Activated B cell treated with CpG ODN at 0.5 μM for 24 hours (primary cell): ENCODE measurements at regions of chr9 and their contacts with region 1.

Region 1: DNA sequence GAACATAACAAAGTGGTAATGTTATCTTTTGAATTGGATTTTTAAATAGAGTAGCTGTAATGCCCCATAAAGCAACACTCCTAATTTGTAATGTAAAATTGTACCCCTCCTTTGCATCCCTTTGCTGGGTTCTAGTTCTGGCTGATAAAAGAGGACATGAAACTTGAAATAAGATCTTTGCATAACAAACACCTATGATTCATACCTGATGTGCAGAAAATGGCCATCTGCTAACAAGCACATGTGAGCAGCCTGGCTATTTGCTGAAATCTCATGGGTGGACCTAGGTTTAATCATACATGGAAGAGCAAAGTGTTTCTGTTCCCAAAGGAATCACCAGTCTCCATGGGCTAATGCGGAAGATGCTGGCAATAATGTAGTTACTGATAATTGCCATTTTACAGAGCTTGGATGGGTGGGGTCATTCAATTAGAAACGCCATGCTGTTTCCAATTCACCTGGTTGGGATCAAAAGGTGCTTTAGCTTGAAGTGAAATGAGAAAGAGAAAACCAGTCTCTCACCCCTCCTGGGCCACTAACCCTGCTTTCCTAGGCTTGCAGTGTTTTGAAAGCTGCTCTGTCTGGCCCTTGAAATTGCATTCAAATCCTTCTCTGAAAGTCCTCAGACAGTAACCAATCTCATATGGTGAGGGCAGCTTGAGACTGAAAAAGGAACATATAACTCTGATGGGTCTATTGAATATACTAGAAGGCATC is 585.1 kb downstream of the TLE4 start:
- DNase-seq: no peak
- ATAC-seq: peak; percentile 88
- H3K4me3 Mint-ChIP-seq: no peak overlapping the region
- H3K27ac Mint-ChIP-seq: peak overlapping the region; percentile 73
- H3K4me1 Mint-ChIP-seq: peaks cover 51% of the 10 kb centered on the region
- H3K27me3 Mint-ChIP-seq: no peaks in the 10 kb centered on the region
- CTCF ChIP-seq: no peak

Region 2: DNA sequence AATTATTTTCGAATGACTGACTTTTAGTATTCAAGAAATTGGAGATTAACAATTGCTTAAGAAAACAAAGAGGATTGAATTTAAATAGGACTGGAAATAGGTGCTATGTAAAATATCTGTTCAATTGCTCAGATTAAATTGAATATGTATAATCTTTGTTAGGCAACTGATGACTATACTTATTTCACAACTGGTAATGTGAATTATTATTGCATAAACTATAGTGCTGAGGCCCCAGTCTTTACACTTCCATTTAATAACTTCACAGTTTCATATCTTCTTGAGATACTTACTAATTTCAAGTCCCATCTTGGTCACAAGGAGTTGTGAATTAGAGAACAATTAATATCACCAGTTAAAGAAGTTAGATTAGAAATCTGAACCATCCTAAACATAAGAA is 1904.3 kb before region 1 on chr9:
- CTCF ChIA-PET with region 1: no interaction called
- POLR2A ChIA-PET with region 1: no interaction called
- intact Hi-C with region 1: loop called (anchors 10 kb)
- DNase-seq: no peak
- ATAC-seq: no peak
- H3K4me3 Mint-ChIP-seq: no peak overlapping the region
- H3K27ac Mint-ChIP-seq: no peak overlapping the region
- H3K4me1 Mint-ChIP-seq: no peaks in the 10 kb centered on the region
- H3K27me3 Mint-ChIP-seq: no peaks in the 10 kb centered on the region
- CTCF ChIP-seq: no peak

Region 3: DNA sequence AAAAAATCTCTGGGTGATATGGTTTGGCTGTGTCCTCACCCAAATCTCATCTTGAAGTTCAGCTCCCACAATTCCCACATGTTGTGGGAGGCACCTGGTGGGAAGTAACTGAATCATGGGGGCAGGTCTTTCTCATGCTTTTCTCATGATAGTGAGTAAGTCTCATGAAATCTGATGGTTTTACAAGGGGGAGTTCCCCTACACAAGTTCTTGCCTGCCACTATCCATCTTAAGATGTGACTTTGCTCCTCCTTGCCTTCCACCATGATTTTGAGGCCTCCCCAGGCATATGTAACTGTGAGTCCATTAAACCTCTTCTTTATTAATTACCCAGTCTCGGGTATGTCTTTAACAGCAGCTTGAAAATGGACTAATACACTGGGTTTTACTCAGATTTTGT is 71.2 kb before region 1 on chr9:
- CTCF ChIA-PET with region 1: no interaction called
- POLR2A ChIA-PET with region 1: no interaction called
- intact Hi-C with region 1: loop called (anchors 5 kb)
- DNase-seq: no peak
- ATAC-seq: no peak
- H3K4me3 Mint-ChIP-seq: no peak overlapping the region
- H3K27ac Mint-ChIP-seq: peak overlapping the region; percentile 59
- H3K4me1 Mint-ChIP-seq: peaks cover 45% of the 10 kb centered on the region
- H3K27me3 Mint-ChIP-seq: no peaks in the 10 kb centered on the region
- CTCF ChIP-seq: no peak

Region 4: GRCh38 chr9:80146466-80146865 is 10.4 kb before region 1 on chr9:
- CTCF ChIA-PET with region 1: no interaction called
- POLR2A ChIA-PET with region 1: no interaction called
- intact Hi-C with region 1: loop called (anchors 1 kb)
- DNase-seq: no peak
- ATAC-seq: no peak
- H3K4me3 Mint-ChIP-seq: no peak overlapping the region
- H3K27ac Mint-ChIP-seq: no peak overlapping the region
- H3K4me1 Mint-ChIP-seq: peaks cover 6% of the 10 kb centered on the region
- H3K27me3 Mint-ChIP-seq: no peaks in the 10 kb centered on the region
- CTCF ChIP-seq: no peak

Region 5: DNA sequence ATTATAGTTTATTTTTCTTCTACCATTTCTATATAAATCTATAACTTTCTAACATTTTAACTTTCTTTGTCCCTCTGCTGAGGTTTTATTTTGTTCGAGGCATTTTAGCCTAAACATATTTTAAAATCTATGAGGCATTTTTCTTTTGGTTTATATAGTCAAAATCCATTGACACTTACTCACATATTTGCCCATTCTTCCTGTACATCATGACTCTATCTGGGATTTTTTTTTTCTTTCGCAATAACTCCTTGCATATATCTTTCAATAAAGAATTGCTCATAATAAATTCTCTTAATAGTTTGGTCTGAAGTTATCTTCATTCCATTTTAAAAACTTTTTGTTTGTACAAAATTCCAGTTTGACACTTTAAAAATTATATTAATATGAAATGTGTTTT is 47.1 kb after region 1 on chr9:
- CTCF ChIA-PET with region 1: no interaction called
- POLR2A ChIA-PET with region 1: no interaction called
- intact Hi-C with region 1: no loop called
- DNase-seq: no peak
- ATAC-seq: no peak
- H3K4me3 Mint-ChIP-seq: no peak overlapping the region
- H3K27ac Mint-ChIP-seq: no peak overlapping the region
- H3K4me1 Mint-ChIP-seq: no peaks in the 10 kb centered on the region
- H3K27me3 Mint-ChIP-seq: no peaks in the 10 kb centered on the region
- CTCF ChIP-seq: no peak